Activated B cell treated with CpG ODN at 0.5 μM for 24 hours (primary cell): ENCODE measurements at regions of chr16 and their contacts with region 1.

Region 1: GRCh38 chr16:30429678-30430427 is at the start of gene DCTPP1:
- DNase-seq: peak; percentile 86
- ATAC-seq: peak; percentile 97
- H3K4me3 Mint-ChIP-seq: no peak within 1 kb of the TSS
- H3K27ac Mint-ChIP-seq: no peak within 1 kb of the TSS
- H3K4me1 Mint-ChIP-seq: peaks cover 2% of the 10 kb centered on the region
- H3K27me3 Mint-ChIP-seq: no peaks in the 10 kb centered on the region
- CTCF ChIP-seq: no peak
- total RNA-seq, gene DCTPP1: 66.7 and 81.5 TPM in 2 replicates

Region 2: DNA sequence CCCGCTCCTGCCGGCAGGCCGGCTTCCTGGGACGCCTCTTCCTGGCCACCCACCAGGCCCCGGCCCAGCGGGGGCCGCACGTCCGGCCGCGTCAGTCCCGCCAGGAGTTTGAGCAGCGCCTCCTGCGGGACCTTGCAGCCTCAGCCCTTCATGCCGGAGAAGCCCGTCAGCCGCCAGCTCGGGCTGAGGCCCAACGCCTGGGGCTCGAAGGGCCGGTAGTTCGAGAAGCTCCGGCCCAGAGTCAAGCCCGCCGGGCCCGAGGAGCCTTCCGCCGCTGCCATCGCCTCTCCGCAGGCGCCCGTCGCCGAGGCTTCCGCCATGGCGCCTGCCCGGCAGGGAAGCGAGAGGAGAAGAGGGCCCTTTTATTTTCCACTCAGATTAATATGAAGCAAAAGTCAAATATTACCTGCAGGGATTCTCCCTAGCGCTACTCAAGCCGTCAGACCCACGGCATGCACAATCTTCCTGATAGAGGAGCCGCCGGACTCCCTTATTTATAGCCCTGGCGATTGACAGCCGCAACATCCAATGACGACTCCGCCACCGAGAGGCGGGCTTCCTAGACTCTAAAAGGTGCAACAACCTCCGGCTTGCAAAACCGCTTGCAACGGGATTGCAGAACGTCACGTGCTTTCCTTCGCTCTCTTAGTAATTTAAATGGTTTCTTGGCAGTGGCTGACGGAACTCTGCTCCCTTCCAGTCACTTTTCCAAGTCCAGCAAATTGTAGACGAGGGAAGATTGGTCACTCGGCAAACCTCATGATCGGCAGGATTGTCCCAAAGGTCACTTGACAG is 15.8 kb after region 1 on chr16 and contains the start of gene SEPHS2:
- CTCF ChIA-PET with region 1: interaction called, 13 read pairs
- POLR2A ChIA-PET with region 1: interaction called, 20 read pairs
- intact Hi-C with region 1: loop called (anchors 1 kb)
- DNase-seq: peak; percentile 87
- ATAC-seq: peak; percentile 96
- H3K4me3 Mint-ChIP-seq: peak within 1 kb of the TSS; percentile 95
- H3K27ac Mint-ChIP-seq: peak within 1 kb of the TSS; percentile 96
- H3K4me1 Mint-ChIP-seq: peaks cover 45% of the 10 kb centered on the region
- H3K27me3 Mint-ChIP-seq: no peaks in the 10 kb centered on the region
- CTCF ChIP-seq: no peak
- total RNA-seq, gene SEPHS2: 79.1 and 80.0 TPM in 2 replicates

Region 3: GRCh38 chr16:30478766-30479478 is 49.1 kb after region 1 on chr16:
- CTCF ChIA-PET with region 1: interaction called, 6 read pairs
- POLR2A ChIA-PET with region 1: interaction called, 38 read pairs
- intact Hi-C with region 1: no loop called
- DNase-seq: no peak
- ATAC-seq: peak; percentile 61
- H3K4me3 Mint-ChIP-seq: peak overlapping the region; percentile 12
- H3K27ac Mint-ChIP-seq: peak overlapping the region; percentile 50
- H3K4me1 Mint-ChIP-seq: peaks cover 39% of the 10 kb centered on the region
- H3K27me3 Mint-ChIP-seq: no peaks in the 10 kb centered on the region
- CTCF ChIP-seq: no peak

Region 4: GRCh38 chr16:30534368-30535105 is 104.7 kb after region 1 on chr16 and contains the start of gene ZNF747:
- CTCF ChIA-PET with region 1: interaction called, 35 read pairs
- POLR2A ChIA-PET with region 1: interaction called, 42 read pairs
- intact Hi-C with region 1: loop called (anchors 1 kb)
- DNase-seq: peak; percentile 85
- ATAC-seq: peak; percentile 83
- H3K4me3 Mint-ChIP-seq: peak within 1 kb of the TSS; percentile 96
- H3K27ac Mint-ChIP-seq: peak within 1 kb of the TSS; percentile 97
- H3K4me1 Mint-ChIP-seq: peaks cover 23% of the 10 kb centered on the region
- H3K27me3 Mint-ChIP-seq: no peaks in the 10 kb centered on the region
- CTCF ChIP-seq: no peak
- total RNA-seq, gene ZNF747: 16.3 and 21.6 TPM in 2 replicates

Region 5: DNA sequence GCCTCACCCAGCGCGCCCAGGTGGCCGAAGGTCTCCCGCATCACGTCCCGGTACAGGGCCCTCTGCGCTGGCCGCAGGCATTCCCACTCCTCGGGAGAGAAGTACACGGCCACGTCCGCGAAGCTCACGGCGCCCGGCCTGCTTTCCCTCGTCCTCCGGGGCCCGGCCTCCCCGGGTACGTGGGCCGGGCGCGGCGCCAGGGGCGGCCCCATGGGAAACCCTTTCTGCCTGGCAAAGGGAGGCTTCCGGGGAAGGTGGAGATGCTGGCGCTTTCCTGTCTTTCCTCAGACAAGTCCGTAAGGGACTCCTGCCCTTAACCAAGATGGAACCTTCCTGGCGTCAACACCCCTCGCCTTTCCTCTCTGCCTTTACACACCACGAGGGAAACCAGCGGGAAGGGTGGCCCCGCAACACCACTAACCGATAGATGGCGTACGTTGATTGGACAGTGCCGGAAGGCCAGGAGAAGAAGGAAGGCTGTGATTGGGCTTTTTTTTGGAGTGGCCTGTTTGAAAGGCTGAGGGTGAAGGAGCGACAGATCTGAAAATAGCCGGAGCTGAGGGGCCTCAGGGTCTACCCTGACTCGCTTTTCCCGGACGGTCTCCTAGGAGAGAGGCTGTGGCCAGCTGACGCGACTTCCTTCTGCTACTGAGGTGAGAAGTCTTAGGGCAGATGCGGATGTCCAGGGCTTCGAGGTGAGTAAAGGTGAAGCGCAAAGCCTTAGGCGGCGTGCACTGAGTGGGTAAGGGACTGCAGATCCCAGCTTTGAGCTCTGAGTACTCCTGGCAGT is 155.7 kb after region 1 on chr16 and contains the start of gene ZNF785:
- CTCF ChIA-PET with region 1: no interaction called
- POLR2A ChIA-PET with region 1: interaction called, 13 read pairs
- intact Hi-C with region 1: loop called (anchors 1 kb)
- DNase-seq: peak; percentile 76
- ATAC-seq: peak; percentile 99
- H3K4me3 Mint-ChIP-seq: peak within 1 kb of the TSS; percentile 85
- H3K27ac Mint-ChIP-seq: peak within 1 kb of the TSS; percentile 79
- H3K4me1 Mint-ChIP-seq: peaks cover 19% of the 10 kb centered on the region
- H3K27me3 Mint-ChIP-seq: no peaks in the 10 kb centered on the region
- CTCF ChIP-seq: no peak
- total RNA-seq, gene ZNF785: 20.0 and 22.8 TPM in 2 replicates

Region 6: DNA sequence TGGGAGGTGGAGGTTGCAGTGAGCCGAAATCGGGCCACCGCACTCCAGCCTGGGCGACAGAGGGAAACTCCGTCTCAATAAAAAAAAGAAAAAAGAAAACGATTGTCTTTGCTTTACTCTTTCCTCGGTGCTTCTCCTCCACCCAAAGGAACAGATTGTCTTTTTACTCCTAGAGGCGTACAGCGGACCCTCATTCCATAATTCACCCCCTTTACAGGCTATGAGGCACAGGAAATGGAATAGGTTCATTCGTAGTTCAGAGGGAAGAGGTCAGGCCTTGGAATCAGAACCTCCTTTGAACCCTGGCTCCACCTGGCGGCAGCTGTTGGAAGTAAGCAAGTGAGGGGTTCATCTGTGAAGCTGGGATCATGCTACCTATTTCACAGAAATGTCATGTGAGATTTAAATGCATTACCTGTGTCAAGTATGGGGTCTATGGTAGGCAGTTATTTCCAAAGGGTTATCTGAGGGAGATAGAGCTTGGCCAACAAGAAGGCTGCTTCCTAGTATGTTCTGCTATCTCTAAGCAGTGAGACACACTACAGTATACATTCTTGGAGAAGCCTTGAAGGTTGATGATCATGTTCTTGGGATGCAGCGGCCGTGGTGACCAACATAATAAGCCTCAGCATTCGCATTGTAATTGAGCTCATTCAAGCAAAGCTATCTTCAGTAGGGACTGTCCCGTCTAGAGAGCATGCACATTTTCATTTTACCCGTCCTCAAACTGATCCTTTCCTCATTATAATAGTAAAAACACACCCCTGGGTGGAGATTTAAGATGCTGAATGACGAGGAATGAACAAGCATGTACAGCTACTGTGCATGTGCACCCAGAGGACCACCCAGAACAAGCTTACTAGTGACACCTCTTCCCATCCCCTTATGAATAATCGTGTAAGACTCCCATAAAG is 199.0 kb after region 1 on chr16:
- CTCF ChIA-PET with region 1: interaction called, 7 read pairs
- POLR2A ChIA-PET with region 1: interaction called, 12 read pairs
- intact Hi-C with region 1: loop called (anchors 1 kb)
- DNase-seq: peak; percentile 84
- ATAC-seq: peak; percentile 93
- H3K4me3 Mint-ChIP-seq: peak overlapping the region; percentile 69
- H3K27ac Mint-ChIP-seq: peak overlapping the region; percentile 76
- H3K4me1 Mint-ChIP-seq: peaks cover 6% of the 10 kb centered on the region
- H3K27me3 Mint-ChIP-seq: no peaks in the 10 kb centered on the region
- CTCF ChIP-seq: peak; percentile 70

Region 7: DNA sequence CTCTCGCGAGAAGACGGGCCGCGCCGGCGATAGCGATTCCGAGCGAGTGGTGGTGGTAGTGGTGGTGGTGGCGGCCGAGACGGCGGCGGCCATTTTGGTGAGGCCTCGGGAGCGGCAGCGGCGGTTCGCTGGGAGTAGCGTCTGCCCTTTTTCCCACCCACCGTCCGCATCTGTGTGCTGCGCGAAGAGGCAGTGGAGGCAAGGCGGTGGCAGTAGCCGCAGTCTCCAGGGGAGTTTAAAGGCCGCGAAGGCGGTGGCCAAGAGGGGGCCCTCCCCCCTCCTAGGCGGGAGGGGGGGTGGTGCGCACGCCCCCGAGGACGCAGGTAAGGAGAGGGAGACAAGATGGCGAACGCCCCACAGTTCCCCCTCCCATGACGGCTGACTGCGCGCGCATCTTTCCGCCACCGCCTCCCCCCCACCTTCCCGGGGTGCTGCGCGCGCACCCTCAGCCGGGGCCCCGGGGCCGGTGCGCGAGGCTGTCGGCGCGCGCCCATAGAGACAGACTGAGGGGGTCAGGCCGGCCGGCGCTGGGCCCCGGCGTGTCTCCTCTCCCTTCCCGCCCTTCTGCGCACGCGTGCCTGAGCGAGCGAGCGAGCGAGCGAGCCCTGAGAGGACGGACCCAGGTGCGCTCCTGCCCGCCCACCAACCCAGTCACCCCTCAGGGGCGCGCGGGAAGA is 268.4 kb after region 1 on chr16:
- CTCF ChIA-PET with region 1: interaction called, 3 read pairs
- POLR2A ChIA-PET with region 1: interaction called, 8 read pairs
- intact Hi-C with region 1: loop called (anchors 2 kb)
- DNase-seq: peak; percentile 96
- ATAC-seq: peak; percentile 75
- H3K4me3 Mint-ChIP-seq: peak overlapping the region; percentile 97
- H3K27ac Mint-ChIP-seq: peak overlapping the region; percentile 100
- H3K4me1 Mint-ChIP-seq: peaks cover 30% of the 10 kb centered on the region
- H3K27me3 Mint-ChIP-seq: no peaks in the 10 kb centered on the region
- CTCF ChIP-seq: no peak